Left lung (tissue), 14 donors: ENCODE measurements at regions of chr4 and their contacts with region 1.

Region 1: DNA sequence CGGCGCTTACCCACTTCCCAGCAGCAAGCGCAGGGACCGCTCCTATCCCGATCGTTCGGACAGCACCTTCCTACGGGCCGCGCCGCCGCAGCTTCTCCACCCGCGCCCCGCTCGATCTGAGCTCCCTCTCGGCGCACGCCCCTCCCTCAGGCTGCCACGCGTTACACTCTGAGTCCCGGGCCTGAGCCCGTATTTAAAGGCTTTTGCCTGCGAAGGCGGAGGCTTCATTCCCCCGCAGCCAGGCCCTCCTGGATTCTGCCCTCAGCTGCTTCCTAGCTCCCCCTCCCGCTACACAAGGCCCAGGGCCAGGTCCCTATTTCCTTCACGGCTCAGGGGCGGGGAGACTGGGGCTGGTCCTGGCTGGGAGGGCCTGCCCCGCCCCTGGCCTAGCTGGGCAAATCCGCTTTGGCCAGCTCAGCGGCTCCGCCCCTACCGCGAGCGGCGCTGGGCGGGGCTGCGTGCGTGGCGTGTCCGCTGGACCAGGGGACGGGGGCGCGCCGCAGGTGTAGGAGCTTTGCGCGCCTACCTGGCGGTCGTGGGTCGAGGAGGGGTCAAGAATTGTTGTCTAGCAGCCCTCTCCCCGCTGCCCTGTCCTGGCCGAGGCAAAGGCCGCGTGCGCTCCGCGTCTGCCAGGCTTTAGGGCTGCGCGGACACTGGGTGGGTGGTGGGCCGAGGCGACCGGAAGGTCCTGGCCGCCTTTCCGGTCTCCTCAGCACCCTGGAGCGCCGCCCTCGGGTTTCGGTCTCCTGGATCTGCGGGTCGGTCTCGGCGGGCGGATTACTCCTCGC is at the start of gene UGDH:
- DNase-seq: peak; percentile 97 to 99 (median 98)
- ATAC-seq: peak; percentile 97
- H3K4me3 ChIP-seq: peak within 1 kb of the TSS; percentile 76 to 88
- H3K27ac ChIP-seq: peak within 1 kb of the TSS; percentile 89 to 95
- H3K4me1 ChIP-seq: peaks cover 9 to 28% of the 10 kb centered on the region in 2 donors
- H3K27me3 ChIP-seq: no peaks in the 10 kb centered on the region
- CTCF ChIP-seq: no peak
- polyA plus RNA-seq, gene UGDH: 78.6 to 108 (median 100) TPM

Region 2: DNA sequence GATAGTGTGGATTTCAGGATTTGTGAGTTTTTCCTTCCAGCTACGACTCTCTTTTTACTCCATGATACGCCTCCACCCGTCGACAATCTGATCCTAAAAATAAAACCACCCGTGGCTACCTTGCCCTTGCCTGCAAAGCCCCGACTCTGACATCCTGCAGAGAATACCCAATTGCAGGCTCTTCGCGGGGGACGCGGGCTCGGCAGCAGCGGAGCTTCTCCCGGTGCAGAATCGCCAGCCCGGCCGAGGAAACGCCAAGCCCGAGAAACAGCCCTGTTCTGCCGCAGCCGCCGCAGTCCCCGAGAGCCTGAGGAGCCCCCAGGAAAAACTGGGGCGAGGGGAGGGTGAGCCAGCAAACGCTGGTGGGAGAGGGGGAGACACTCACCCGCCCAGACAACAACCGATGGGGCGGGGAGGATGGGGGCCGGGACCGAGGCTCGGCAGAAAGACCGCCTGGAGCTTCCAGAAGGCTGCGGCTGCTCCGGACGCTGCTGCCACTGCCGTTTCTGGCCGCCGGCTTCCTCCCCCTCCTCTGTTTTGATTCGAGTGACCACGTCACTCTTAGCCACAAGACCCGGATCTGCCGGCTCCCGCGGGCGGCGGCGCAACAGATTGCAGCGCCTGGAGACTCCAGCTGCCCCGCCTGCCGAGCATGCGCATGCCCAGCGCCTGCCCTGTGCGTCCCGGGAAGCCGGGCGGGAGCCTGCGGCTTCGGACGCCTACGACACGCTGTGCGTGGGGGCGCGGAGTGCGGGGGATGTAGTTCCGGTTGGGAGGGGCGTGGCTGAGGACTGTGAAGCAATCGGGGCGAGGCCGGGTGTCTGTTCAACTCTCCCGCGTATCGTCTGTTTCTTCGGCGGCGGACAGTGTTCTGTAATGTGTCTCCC is 111.1 kb after region 1 on chr4 and contains the start of gene SMIM14:
- intact Hi-C with region 1: loop called in 1 of 2 experiments (anchors 10 kb)
- DNase-seq: peak; percentile 97 to 100 (median 99)
- ATAC-seq: peak; percentile 93
- H3K4me3 ChIP-seq: peak within 1 kb of the TSS; percentile 81 to 91
- H3K27ac ChIP-seq: peak within 1 kb of the TSS; percentile 97 to 99
- H3K4me1 ChIP-seq: peaks cover 5 to 41% of the 10 kb centered on the region in 2 donors
- H3K27me3 ChIP-seq: no peaks in the 10 kb centered on the region
- CTCF ChIP-seq: peak in 1 of 2 donors; percentile 44
- polyA plus RNA-seq, gene SMIM14: 52.9 to 67.8 (median 54.8) TPM